Activated T-helper 1 cell treated with anti-CD3 and anti-CD28 coated beads, Interleukin-12 subunit alpha, Interleukin-12 subunit beta, Interleukin-2, Interleukin-4 antibody, amounts not matched to agents 30 ng/mL and 10 ng/mL and 1 ng/mL, durations not matched to agents 14 hours and 24 hours and 36 hours (primary cell): ENCODE measurements at regions of chr1 and their contacts with region 1.

Region 1: GRCh38 chr1:159077120-159077961 is 775 bp upstream of the AIM2 start:
- DNase-seq: peak; percentile 96
- H3K4me3 Mint-ChIP-seq: peak overlapping the region; percentile 91
- H3K27ac Mint-ChIP-seq: peak overlapping the region; percentile 97
- H3K4me1 Mint-ChIP-seq: peaks cover 61% of the 10 kb centered on the region
- H3K27me3 Mint-ChIP-seq: no peaks in the 10 kb centered on the region

Region 2: DNA sequence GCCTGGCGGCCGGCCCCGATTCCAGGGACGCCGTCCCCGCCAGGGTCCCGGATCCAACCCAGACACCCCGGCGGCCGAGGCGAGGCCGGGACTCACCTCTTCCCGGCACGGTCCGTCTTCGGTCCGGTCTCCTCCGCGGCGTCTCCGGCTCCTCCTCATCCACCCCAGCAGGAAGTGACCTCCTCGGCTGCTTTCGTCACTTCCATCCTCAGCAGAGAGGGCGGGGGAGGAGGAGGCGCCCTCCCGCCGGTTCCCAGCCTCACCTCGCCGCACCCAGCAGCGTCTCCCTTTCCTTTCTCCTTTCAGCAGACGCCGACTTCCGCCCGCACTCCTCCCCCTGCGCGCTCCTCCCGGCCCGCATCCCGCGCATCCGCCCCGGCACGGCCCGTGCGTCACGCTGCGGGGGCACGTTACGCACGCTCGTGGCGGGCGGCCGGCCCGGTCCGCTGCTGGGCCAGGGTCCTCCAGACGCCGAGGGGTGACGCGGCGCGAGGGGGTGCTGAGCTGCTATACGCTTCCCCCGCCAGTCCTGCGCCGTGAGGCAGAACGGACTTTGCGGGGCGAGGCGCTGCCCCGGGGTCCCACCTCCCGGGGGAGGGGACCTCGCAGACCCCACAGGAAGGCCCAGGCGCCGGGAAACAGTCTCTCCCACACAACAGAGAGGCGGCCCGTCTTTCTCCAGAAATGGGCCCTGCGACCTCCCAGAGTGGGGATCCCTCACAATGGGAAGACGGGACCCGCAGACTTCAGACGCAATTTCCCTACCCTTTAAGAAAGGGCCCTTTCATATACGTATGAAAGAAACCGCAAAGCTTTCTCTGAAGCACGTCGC is 1938.9 kb before region 1 on chr1 and contains the start of gene ETV3:
- intact Hi-C with region 1: loop called (anchors 5 kb)
- DNase-seq: peak; percentile 89
- H3K4me3 Mint-ChIP-seq: peak within 1 kb of the TSS; percentile 93
- H3K27ac Mint-ChIP-seq: peak within 1 kb of the TSS; percentile 93
- H3K4me1 Mint-ChIP-seq: peaks cover 71% of the 10 kb centered on the region
- H3K27me3 Mint-ChIP-seq: no peaks in the 10 kb centered on the region
- total RNA-seq, gene ETV3: 47.6 and 51.3 TPM in 2 replicates

Region 3: DNA sequence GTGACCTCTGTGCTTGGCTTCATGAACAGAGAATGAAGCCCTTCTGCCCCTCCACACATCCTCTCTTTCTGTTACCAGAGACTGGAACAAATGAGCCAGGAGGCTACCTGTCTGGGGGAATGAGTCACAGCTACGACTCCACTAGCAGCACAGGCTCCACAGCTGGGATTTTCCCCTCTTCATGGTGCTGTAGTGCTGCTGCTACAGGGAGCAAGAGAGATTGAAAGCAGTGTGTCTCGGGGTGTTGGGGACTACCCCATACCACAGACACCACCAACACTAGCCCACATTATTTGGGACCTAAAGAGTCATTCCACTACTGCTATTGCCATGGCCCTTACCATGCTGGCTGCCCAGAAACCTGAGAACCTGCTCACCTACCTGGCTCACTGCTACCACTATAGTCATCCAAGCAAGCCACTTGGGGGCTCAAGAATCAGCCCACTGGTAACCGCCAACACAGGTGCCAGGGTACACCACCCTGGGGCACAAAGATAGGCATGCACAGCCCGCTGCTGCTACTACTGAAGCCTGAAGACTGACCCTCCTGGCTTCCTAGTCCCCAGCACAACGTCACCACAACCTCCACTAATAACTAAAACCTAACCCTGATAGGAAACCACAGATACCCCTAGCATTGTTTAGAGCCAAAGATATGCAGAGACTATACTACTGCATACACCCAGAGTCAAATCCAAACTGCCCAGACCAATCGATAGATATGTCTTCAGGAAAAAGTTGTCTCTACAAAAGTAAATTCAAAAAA is 706.0 kb before region 1 on chr1:
- intact Hi-C with region 1: loop called (anchors 5 kb)
- DNase-seq: peak; percentile 2
- H3K4me3 Mint-ChIP-seq: no peak overlapping the region
- H3K27ac Mint-ChIP-seq: peak overlapping the region; percentile 58
- H3K4me1 Mint-ChIP-seq: no peaks in the 10 kb centered on the region
- H3K27me3 Mint-ChIP-seq: no peaks in the 10 kb centered on the region

Region 4: DNA sequence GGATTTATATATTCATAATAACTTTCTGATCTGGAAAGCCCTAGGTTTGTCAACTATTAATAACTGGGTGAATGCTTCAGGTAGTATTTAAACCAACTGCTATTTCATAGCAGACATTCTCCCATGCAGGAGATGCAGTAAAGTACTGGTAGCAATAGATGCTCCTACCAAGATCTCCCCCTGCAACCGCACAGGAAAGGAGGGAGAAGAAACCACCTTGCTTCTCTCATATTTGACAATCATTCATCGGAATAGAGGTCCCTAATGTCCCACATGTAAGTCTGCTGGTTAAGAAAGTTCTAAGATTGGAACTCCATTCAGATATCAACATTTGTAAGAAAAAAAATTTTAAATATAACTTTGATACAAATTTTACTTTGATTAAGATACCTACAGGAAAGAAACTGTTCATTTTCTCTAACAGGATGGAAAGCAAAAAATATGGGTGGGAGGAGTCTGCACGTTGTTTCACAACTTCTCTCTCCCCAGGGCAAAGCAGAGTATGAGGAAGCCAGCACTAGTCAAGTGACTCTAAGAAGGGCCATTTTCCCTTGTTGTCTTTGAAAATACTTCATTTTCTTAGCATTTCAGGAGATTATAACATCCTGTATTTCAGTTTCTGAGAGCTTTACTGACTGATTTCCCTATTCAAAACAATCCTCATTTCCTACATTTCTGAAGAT is 146.1 kb before region 1 on chr1 and contains the start of gene PYHIN1:
- intact Hi-C with region 1: loop called (anchors 1 kb)
- DNase-seq: peak; percentile 18
- H3K4me3 Mint-ChIP-seq: peak within 1 kb of the TSS; percentile 91
- H3K27ac Mint-ChIP-seq: peak within 1 kb of the TSS; percentile 91
- H3K4me1 Mint-ChIP-seq: peaks cover 48% of the 10 kb centered on the region
- H3K27me3 Mint-ChIP-seq: peaks cover 5% of the 10 kb centered on the region
- total RNA-seq, gene PYHIN1: 19.5 and 19.9 TPM in 2 replicates

Region 5: GRCh38 chr1:159009704-159010361 is 67.5 kb before region 1 on chr1 and contains the start of gene IFI16:
- intact Hi-C with region 1: loop called (anchors 1 kb)
- DNase-seq: peak; percentile 65
- H3K4me3 Mint-ChIP-seq: peak within 1 kb of the TSS; percentile 91
- H3K27ac Mint-ChIP-seq: peak within 1 kb of the TSS; percentile 95
- H3K4me1 Mint-ChIP-seq: peaks cover 64% of the 10 kb centered on the region
- H3K27me3 Mint-ChIP-seq: no peaks in the 10 kb centered on the region
- total RNA-seq, gene IFI16: 223 and 232 TPM in 2 replicates

Region 6: GRCh38 chr1:159122005-159122621 is 44.8 kb after region 1 on chr1:
- intact Hi-C with region 1: loop called (anchors 2 kb)
- DNase-seq: no peak
- H3K4me3 Mint-ChIP-seq: no peak overlapping the region
- H3K27ac Mint-ChIP-seq: no peak overlapping the region
- H3K4me1 Mint-ChIP-seq: no peaks in the 10 kb centered on the region
- H3K27me3 Mint-ChIP-seq: peaks cover 19% of the 10 kb centered on the region

Region 7: DNA sequence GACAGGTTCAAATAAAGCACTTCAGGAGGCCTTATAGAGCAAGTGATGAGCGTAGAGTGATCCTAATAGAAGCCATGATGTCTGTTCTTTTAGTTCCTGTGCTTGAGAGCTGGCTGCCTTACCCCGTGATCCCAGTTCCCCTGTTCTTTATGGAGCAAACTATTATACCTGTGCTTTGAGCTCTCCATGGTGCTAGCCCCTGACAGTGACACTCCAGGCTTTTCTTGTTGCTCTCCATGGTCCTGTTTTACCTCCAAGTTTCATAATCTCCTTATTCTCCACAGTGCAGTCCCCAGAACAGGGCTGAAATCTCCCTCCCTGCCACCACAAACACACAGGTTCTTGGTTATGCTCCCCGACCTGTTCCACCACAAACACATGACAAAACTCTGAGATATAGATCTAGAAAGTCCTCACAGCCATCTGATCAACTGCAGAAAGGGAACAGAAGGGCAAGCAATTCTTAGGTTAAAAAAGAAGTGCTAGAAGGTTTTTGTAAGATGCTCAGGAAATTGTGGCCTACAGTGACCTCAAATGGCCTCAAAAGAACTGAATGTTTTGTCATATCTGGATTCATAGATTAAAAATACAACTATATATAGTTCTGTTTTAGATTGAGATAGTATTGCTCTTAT is 100.0 kb after region 1 on chr1:
- intact Hi-C with region 1: no loop called
- DNase-seq: peak; percentile 2
- H3K4me3 Mint-ChIP-seq: no peak overlapping the region
- H3K27ac Mint-ChIP-seq: no peak overlapping the region
- H3K4me1 Mint-ChIP-seq: no peaks in the 10 kb centered on the region
- H3K27me3 Mint-ChIP-seq: peaks cover 20% of the 10 kb centered on the region

Region 8: GRCh38 chr1:159924981-159925712 is 847.8 kb after region 1 on chr1 and contains the start of gene TAGLN2:
- intact Hi-C with region 1: loop called (anchors 1 kb)
- DNase-seq: peak; percentile 92
- H3K4me3 Mint-ChIP-seq: peak within 1 kb of the TSS; percentile 94
- H3K27ac Mint-ChIP-seq: peak within 1 kb of the TSS; percentile 99
- H3K4me1 Mint-ChIP-seq: peaks cover 57% of the 10 kb centered on the region
- H3K27me3 Mint-ChIP-seq: peaks cover 1% of the 10 kb centered on the region
- total RNA-seq, gene TAGLN2: 442 and 461 TPM in 2 replicates